Lower leg skin (tissue), 4 donors: ENCODE measurements at regions of chr14 and their contacts with region 1.

Region 1: GRCh38 chr14:47392326-47392725 is 283.1 kb downstream of the MDGA2 start:
- DNase-seq: no peak
- H3K4me3 ChIP-seq: no peak overlapping the region
- CTCF ChIP-seq: no peak
- POLR2A ChIP-seq: no peak

Region 2: DNA sequence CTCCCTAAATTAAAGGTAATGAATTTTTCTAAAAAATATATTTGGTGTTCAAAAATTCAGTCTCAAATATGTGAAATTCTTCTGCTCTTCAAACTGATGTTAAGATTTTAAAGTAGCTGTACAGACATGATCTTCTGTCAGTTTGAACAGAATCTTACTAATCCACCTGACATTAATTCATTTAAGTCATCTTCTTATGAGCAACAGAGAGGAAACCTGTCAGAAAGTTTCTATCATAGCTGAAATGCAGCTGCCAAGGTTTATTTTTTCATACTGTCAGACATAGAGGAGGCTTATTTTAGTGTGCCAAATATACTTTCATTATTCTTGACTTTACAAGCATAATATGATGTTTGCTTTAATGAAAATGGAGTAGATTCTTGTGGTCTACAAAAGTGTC is 1452.8 kb before region 1 on chr14:
- intact Hi-C with region 1: loop called (anchors 5 kb)
- DNase-seq: no peak
- H3K4me3 ChIP-seq: no peak overlapping the region
- CTCF ChIP-seq: no peak
- POLR2A ChIP-seq: no peak

Region 3: GRCh38 chr14:47252802-47253201 is 139.5 kb before region 1 on chr14:
- intact Hi-C with region 1: no loop called
- DNase-seq: no peak
- H3K4me3 ChIP-seq: no peak overlapping the region
- CTCF ChIP-seq: no peak
- POLR2A ChIP-seq: no peak

Region 4: DNA sequence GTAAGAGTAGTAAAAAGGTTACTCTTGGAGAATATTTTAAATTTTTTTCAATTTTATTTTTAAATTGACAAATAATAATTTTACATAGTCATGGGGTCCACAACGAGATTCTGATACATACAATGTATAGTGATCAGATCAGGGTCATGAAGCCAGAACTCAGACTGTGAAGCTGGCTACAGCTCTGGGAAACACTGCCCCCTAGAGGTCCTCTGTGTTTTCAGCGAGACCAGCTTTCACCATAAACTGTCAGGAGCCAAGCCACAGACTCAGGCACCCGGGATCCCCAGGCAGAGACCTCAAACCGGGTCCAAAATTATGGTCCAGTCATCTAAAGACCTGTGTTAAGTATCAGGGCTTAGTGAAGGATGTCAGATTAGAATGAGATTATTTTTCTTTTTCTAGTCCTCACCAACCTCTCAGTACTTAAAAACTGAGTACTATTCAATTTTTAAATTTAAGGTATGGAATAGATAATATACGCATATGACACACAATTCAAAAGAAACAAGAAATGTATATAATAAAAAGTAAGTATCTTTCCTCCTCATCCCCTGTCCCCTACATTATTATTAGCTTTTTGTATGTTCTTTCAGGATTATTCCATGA is 114.0 kb before region 1 on chr14:
- intact Hi-C with region 1: no loop called
- DNase-seq: no peak
- H3K4me3 ChIP-seq: no peak overlapping the region
- CTCF ChIP-seq: no peak
- POLR2A ChIP-seq: no peak